SK-N-SH (cell line): ENCODE measurements at regions of chr16 and their contacts with region 1.

Region 1: GRCh38 chr16:50210266-50211038 is 55.9 kb upstream of the ADCY7 start:
- DNase-seq: peak; percentile 68
- H3K4me3 ChIP-seq: no peak overlapping the region; a peak in 1 of 4 replicates
- H3K27ac ChIP-seq: peak overlapping the region; percentile 47 to 71
- H3K4me1 ChIP-seq: peaks cover 29 to 35% of the 10 kb centered on the region in 2 experiments
- H3K27me3 ChIP-seq: no peaks in the 10 kb centered on the region
- CTCF ChIP-seq: peak; percentile 83
- EP300 ChIP-seq: no peak
- RAD21 ChIP-seq: peak; percentile 87

Region 2: DNA sequence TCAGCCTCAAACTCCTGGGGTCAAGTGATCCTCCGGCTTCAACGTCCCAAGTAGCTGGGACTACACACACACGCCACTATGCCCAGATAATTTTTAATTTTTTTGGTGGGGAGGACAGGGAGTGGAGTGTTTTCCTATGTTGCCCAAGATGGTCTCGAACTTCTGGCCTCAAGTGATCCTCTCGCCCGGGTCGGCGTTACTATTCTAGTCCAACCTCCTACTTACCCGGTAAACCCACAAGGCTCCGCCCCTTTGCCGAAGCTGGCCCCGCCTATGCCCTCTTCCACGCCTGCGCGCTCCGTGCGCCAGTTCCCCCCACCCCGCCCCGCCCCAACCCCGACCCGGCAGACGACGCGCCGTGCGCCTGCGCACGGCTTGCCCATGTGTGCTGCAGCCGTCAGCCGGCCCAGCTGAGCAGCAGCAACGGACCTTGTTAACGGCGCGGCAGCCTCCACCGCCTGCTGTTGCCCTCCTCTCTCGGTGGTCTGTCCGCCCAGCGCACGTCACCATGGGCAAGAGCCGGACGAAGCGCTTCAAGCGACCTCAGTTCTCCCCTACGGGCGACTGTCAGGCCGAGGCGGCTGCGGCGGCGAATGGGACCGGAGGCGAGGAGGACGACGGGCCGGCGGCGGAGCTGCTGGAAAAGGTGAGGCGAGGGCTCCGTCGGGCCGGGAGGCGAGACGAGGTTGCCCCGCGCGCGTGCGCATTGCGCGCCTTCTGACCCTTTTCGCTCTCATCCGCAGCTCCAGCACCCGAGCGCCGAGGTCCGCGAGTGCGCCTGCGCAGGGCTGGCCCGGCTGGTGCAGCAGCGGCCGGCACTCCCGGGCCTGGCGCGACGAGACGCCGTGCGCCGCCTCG is 144.6 kb before region 1 on chr16 and contains the start of gene HEATR3:
- CTCF ChIA-PET with region 1: interaction called, 88 read pairs
- POLR2A ChIA-PET with region 1: interaction called, 5 read pairs
- DNase-seq: peak; percentile 97
- H3K4me3 ChIP-seq: peak within 1 kb of the TSS; percentile 76 to 93
- H3K27ac ChIP-seq: peak within 1 kb of the TSS; percentile 89 to 95
- H3K4me1 ChIP-seq: peaks cover 12 to 17% of the 10 kb centered on the region in 2 experiments; a peak in 3 of 4 replicates
- H3K27me3 ChIP-seq: no peaks in the 10 kb centered on the region
- CTCF ChIP-seq: no peak
- EP300 ChIP-seq: no peak
- RAD21 ChIP-seq: no peak
- polyA plus RNA-seq, gene HEATR3: 10.1 and 12.9 TPM in 2 replicates

Region 3: DNA sequence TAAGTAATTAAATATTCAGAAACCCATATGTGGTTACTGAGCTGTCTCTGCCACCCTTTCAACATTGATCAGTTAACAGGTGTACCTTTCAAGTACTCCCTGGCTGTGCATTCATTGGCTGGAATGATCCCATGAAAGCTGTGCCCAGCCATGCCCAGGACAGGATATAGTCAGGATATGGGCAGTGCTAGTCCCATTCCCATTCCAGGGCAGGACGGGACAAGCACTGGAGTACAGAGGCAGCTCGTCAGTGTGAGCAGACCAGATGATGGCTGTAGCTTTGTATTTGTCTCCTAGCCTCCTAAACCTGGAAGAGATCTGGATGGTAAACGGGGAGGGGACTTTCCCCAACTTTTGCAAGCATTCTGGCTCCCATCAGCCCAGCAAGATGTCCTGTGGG is 122.2 kb before region 1 on chr16:
- CTCF ChIA-PET with region 1: interaction called, 11 read pairs
- POLR2A ChIA-PET with region 1: no interaction called
- DNase-seq: no peak
- H3K4me3 ChIP-seq: no peak overlapping the region
- H3K27ac ChIP-seq: no peak overlapping the region
- H3K4me1 ChIP-seq: no peaks in the 10 kb centered on the region
- H3K27me3 ChIP-seq: no peaks in the 10 kb centered on the region
- CTCF ChIP-seq: no peak
- EP300 ChIP-seq: no peak
- RAD21 ChIP-seq: no peak

Region 4: GRCh38 chr16:50166511-50167500 is 43.6 kb before region 1 on chr16:
- CTCF ChIA-PET with region 1: interaction called, 15 read pairs
- POLR2A ChIA-PET with region 1: no interaction called
- DNase-seq: no peak
- H3K4me3 ChIP-seq: no peak overlapping the region
- H3K27ac ChIP-seq: peak overlapping the region in 1 of 2 experiments; percentile 74; a peak in 2 of 4 replicates
- H3K4me1 ChIP-seq: peaks cover 2 to 19% of the 10 kb centered on the region in 2 experiments; a peak in 3 of 4 replicates
- H3K27me3 ChIP-seq: no peaks in the 10 kb centered on the region
- CTCF ChIP-seq: no peak
- EP300 ChIP-seq: no peak
- RAD21 ChIP-seq: no peak

Region 5: GRCh38 chr16:50195276-50195675 is 15.2 kb before region 1 on chr16:
- CTCF ChIA-PET with region 1: interaction called, 16 read pairs
- POLR2A ChIA-PET with region 1: no interaction called
- DNase-seq: no peak
- H3K4me3 ChIP-seq: peak overlapping the region in 1 of 2 experiments; percentile 43; a peak in 2 of 4 replicates
- H3K27ac ChIP-seq: peak overlapping the region; percentile 31 to 85; a peak in 3 of 4 replicates
- H3K4me1 ChIP-seq: peaks cover 0 to 13% of the 10 kb centered on the region in 2 experiments; a peak in 1 of 4 replicates
- H3K27me3 ChIP-seq: no peaks in the 10 kb centered on the region
- CTCF ChIP-seq: no peak
- EP300 ChIP-seq: no peak
- RAD21 ChIP-seq: no peak

Region 6: DNA sequence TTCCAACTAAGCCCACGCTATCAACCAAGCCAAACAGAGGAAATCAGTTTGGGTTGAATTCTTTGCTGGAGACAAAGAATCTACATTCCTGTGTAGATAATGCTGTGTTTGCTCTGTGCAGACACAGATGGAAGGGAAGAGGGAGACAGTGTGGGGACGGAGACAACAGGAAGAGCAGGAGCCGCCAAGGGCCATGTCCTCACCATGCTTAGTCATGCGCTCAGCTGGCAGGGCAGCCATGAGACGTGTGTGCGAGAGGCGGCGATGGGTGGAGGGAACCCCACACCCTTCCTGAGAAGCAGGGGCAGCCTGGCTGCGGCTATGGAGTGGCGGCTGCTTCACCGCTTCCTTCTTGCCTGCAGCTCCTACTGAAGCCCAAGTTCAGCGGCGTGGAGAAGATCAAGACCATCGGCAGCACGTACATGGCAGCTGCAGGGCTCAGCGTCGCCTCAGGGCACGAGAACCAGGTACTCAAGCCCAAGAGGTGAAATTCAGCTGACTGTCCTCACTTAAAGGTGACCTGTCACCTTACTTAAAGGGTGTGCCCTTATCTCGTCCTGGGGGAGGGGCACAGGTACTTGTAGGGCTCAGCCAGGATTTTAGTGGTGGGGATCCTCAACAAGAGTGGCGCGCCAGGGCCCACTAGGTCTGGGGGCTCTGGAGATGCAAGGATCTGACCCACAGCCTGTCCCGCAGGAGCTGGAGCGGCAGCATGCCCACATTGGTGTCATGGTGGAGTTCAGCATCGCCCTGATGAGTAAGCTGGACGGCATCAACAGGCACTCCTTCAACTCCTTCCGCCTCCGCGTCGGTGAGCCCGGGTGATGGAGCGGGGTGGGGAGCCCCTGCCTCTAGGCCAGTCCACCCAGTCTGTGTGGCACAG is 103.4 kb after region 1 on chr16:
- CTCF ChIA-PET with region 1: interaction called, 14 read pairs
- POLR2A ChIA-PET with region 1: no interaction called
- DNase-seq: no peak
- H3K4me3 ChIP-seq: no peak overlapping the region
- H3K27ac ChIP-seq: peak overlapping the region in 1 of 2 experiments; percentile 16; a peak in 1 of 4 replicates
- H3K4me1 ChIP-seq: peaks cover 0 to 52% of the 10 kb centered on the region in 2 experiments; a peak in 2 of 4 replicates
- H3K27me3 ChIP-seq: no peaks in the 10 kb centered on the region
- CTCF ChIP-seq: no peak
- EP300 ChIP-seq: no peak
- RAD21 ChIP-seq: no peak

Region 7: GRCh38 chr16:50390914-50391716 is 180.7 kb after region 1 on chr16:
- CTCF ChIA-PET with region 1: no interaction called
- POLR2A ChIA-PET with region 1: no interaction called
- DNase-seq: peak; percentile 72
- H3K4me3 ChIP-seq: no peak overlapping the region
- H3K27ac ChIP-seq: peak overlapping the region in 1 of 2 experiments; percentile 97; a peak in 2 of 4 replicates
- H3K4me1 ChIP-seq: peaks cover 0 to 56% of the 10 kb centered on the region in 2 experiments; a peak in 1 of 4 replicates
- H3K27me3 ChIP-seq: peaks cover 9% of the 10 kb centered on the region; the same call in 1 of the 2 replicates
- CTCF ChIP-seq: no peak
- EP300 ChIP-seq: 0 out of 4 replicates have a peak, but pooled peaks of 1 of the 2 experiments have one; percentile 27
- RAD21 ChIP-seq: peak; percentile 13; the same call in 1 of the 2 replicates